ENCODE measurements at regions of chr17 and their contacts with region 1.

Region 1: DNA sequence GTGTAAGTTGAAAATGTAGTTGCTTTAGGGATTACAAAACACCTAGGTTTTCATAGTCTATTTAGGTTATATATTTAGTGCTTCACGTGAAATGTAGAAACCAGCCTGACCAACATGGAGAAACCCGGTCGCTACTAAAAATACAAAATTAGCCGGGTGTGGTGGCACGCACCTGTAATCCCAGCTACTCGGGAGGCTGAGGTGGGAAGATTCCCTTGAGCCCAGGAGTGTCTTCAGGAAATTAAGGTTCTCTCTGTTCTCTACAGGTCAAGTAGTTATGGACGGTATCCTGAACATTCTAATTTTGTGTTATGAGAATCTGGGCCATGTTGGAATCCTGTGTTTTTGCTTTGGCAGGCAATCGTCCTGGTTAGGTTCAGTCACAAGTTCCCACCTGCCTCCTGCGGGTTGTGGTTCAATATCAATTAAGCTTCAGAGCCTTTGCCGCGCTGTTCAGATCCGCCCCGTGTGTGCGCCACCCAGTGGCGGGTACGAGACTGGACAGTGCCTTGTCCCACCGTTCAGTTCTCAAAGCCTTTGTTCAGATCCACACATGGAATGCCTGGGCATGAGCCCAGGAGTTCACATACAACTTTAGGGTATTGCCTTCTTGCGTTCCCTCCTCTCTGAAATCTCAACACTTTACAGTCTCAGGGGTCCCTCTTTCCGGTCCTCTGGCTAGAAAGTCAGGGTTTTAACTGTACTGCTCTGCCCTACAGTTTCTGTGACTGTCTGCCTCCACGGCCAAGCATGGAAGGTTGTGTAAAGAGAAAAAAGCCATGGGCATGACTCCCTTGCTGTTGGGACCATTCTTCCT is 41.7 kb downstream of the HEATR6 start:
- DNase-seq: peak; percentile 82
- H3K4me3 ChIP-seq: no peak overlapping the region
- H3K27ac ChIP-seq: no peak overlapping the region
- H3K4me1 ChIP-seq: peaks cover 5% of the 10 kb centered on the region
- CTCF ChIP-seq: peak; percentile 99

Region 2: DNA sequence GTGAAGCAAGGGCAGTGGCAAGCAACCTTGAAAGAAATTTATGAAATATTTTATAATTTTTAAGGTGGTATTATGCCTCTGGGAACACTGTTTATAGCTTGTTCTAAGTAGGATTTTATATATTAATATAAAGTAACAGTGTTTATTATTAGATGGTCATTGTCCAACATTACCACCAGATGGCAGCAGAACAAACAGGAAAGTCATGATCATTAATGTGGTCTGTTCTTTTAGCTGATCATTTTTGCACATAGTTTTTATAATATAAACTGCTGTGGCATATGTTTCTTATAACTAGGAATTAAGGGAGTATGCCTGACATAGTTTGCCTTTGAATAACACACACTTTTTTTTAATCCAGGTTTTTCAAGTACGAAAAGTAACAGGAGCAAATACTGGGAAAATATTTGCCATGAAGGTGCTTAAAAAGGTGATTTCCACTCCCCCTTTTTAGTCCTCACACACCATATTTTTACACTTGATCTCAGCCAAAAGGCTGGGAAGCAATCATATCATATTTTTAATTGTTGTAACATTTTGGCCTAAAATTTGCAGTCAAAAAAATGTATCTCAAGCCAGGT is 122.6 kb before region 1 on chr17:
- CTCF ChIA-PET with region 1: interaction called, 3 read pairs
- POLR2A ChIA-PET with region 1: interaction called, 3 read pairs
- intact Hi-C with region 1: loop called (anchors 5 kb)
- DNase-seq: peak; percentile 67
- H3K4me3 ChIP-seq: no peak overlapping the region
- H3K27ac ChIP-seq: no peak overlapping the region
- H3K4me1 ChIP-seq: no peaks in the 10 kb centered on the region
- CTCF ChIP-seq: peak; percentile 93

Region 3: GRCh38 chr17:60154616-60155426 is 117.8 kb after region 1 on chr17:
- CTCF ChIA-PET with region 1: no interaction called
- POLR2A ChIA-PET with region 1: no interaction called
- intact Hi-C with region 1: no loop called
- DNase-seq: no peak
- H3K4me3 ChIP-seq: no peak overlapping the region
- H3K27ac ChIP-seq: no peak overlapping the region
- H3K4me1 ChIP-seq: peaks cover 9% of the 10 kb centered on the region
- CTCF ChIP-seq: no peak